Cardiac septum (tissue), 1 donor: ENCODE measurements at regions of chr22 and their contacts with region 1.

Region 1: DNA sequence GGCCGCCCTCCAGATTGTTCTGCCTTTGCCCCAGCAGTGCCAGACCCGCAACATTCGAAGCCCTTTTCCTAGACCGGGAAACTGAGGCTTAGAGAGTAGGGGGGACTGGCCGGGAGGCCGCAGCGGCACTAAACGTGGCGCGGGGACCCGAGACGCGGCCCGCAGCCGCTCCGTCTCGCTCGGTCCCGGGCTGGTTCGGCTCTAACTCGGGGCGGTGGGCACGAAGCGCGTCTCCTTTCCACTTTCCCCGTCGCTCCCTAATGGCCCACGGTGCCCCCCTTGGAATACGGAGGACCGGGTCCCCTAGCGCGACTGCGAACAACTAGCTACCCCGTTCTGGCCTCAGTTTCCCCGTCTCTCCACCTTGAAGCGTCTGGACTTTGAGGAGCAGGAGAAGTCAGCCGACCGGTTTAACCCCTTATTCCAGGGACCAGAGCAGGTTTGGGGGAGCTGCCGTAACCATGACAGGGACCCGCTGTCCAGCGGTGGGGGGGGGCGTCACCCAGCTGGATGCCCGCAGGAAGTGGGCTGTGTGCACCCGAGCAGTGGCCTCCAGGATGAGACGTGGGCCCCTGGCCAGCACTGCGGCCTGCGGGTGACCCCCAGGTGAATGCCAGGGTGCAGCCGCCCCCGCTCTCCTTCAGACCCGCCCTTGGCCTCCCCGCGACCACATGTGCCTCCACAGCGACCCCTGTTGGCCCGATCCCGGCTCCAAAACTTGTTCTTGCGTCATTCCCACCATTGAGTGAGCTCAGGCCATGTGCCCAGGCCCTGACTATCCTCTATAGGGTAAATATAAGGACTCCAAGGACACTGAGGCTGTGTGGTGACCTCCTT is 1.1 kb downstream of the CDC42EP1 start:
- DNase-seq: peak; percentile 93

Region 2: DNA sequence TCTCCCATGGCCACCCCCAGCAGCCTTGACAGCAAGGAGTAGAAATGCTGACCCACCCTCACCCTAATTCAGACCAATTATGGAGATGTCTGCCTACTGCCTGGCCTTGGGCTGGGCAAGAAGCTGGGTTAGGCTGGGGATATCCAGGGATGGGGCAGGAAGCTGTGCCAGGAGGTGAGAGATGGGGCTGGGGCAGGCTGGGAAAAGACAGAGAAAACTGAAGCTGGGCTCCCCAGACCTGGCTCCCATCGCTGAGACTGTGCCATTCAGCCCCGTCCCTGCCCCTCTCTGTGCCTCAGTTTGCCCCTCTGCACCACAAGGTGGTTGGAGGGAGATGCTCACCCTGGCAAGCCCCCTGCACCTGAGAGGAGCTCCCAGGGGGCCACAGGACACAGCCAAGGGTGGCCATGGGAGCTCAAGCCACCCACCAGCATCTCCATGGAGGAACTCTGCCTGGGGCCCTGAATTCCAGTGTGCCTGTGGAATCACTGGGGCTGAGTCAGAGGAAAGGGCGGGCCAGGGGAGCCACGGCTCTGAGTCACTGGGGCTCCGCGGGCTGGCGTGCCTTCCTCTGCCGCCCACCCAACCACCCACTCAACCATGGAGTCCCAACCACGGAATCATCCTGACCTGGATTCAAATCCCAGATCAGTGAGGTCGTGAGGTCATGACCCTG is 36.2 kb before region 1 on chr22:
- intact Hi-C with region 1: loop called (anchors 1 kb)
- DNase-seq: no peak

Region 3: DNA sequence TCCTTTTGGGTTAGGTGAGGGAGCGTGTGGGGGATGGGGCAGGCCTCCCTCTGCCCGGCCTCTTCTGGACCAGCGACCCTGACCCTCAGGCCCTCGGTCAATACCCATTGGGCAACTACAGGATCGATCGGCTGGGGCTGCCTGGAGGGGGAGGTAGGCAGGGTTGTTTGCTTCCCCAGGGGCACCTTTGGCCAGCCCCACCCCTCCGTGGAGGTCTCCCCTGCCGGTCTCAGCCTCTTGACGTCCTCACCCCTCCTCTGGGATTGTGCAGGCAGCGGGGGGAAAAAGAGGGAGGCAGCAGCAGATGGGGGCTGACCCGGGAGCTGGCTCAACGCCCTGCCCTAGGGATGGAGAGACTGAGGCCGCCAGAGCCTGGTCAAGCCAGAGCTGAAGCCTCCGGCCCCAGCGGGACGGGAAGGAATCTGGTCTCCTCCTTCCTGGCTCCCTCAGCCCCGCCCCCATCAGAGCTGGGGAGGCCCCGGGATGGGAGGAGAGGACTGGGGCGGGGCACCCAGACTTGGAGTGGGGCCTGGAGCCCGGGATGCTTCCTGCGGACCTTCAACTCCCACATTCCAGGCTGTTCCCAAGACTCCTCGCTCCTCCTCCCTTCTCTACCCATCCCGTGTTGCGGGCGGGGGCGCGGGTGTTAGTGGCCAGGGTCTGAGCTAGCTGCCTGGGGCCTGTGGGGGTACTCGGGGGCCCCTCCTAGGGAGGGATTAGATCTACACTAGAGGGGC is 15.6 kb before region 1 on chr22:
- intact Hi-C with region 1: loop called (anchors 2 kb)
- DNase-seq: peak; percentile 92

Region 4: GRCh38 chr22:37594237-37594636 is 32.8 kb after region 1 on chr22:
- intact Hi-C with region 1: no loop called
- DNase-seq: no peak

Region 5: GRCh38 chr22:37608477-37609239 is 47.2 kb after region 1 on chr22 and contains the start of gene GGA1:
- intact Hi-C with region 1: loop called (anchors 5 kb)
- DNase-seq: peak; percentile 98
- total RNA-seq, gene GGA1: 32.5 TPM